CD4-positive, alpha-beta T cell (primary cell): ENCODE measurements at regions of chr20 and their contacts with region 1.

Region 1: DNA sequence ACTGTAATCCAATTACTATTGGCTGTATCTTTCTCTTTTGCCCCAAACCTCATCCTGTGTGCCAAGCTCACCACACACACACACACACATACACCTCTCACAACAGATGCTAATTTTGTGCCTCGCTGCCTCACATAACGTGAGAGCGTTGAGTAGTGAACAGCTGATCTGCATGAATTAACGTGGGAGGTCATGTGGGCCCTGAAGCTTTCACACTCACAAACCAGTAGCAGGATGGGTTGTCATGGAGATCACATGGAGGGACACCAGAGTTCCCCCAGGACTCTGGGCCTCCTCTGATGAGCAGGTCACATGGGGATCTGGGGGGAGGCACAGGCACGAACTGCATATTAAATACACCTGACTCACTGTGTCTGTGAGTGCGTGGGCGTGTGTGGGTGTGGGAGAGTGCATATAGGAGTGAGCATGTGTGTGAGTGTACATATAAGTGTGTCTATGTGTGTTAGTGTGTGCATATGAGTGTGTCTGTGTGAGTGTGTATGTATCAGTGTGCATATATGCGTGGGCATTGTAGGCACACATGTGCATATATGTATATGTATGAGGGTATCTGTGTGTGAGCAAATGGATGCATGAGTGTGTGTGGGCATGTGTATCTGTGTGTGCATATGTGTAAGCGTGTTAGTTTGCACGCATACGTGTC is 62.7 kb upstream of the SULF2 start:
- DNase-seq: no peak
- ATAC-seq: no peak
- H3K4me3 ChIP-seq: no peak overlapping the region
- H3K4me3 Mint-ChIP-seq: no peak overlapping the region
- H3K27ac ChIP-seq: no peak overlapping the region
- H3K27ac Mint-ChIP-seq: no peak overlapping the region
- H3K4me1 ChIP-seq: no peaks in the 10 kb centered on the region
- H3K4me1 Mint-ChIP-seq: no peaks in the 10 kb centered on the region
- H3K27me3 ChIP-seq: no peaks in the 10 kb centered on the region
- H3K27me3 Mint-ChIP-seq: peaks cover 17% of the 10 kb centered on the region
- CTCF ChIP-seq: no peak

Region 2: DNA sequence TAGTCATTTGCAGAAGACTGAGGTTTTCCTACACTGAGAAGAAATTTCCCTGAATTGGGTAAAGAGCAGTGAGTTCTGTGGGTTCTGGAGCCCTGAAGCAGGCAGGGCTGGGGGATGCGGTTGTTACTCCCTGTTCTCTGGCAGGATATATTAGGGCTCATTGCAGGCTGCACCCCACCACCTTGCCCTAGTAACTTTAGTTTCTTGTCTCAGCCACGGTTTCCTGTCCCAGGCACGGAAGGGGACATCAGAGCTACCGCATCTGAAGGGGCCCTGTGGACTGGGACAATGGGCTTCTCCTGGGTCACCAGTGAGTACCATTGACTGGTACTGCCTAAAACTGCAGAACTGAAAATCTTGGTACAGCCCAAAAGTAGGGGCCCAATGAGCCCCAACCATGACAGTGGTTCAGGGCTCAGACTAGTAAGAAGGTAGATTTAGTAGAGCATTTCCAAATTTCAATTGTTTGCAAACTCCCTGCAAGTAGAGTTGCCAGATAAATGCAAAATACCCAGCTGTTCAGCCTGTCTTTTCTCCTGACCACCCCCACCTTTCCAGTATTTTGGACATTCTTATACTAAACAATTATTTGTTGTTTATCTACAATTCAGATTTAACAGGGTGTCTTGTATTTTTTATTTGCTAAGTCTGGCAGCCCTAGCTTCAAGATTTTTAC is 1007.8 kb before region 1 on chr20:
- CTCF ChIA-PET with region 1: no interaction called
- POLR2A ChIA-PET with region 1: no interaction called
- intact Hi-C with region 1: no loop called
- DNase-seq: no peak
- ATAC-seq: no peak
- H3K4me3 ChIP-seq: no peak overlapping the region
- H3K4me3 Mint-ChIP-seq: no peak overlapping the region
- H3K27ac ChIP-seq: no peak overlapping the region
- H3K27ac Mint-ChIP-seq: no peak overlapping the region
- H3K4me1 ChIP-seq: no peaks in the 10 kb centered on the region
- H3K4me1 Mint-ChIP-seq: no peaks in the 10 kb centered on the region
- H3K27me3 ChIP-seq: peaks cover 0 to 5% of the 10 kb centered on the region in 2 experiments
- H3K27me3 Mint-ChIP-seq: peaks cover 50% of the 10 kb centered on the region
- CTCF ChIP-seq: no peak

Region 3: GRCh38 chr20:47886460-47887041 is 38.6 kb after region 1 on chr20:
- CTCF ChIA-PET with region 1: no interaction called
- POLR2A ChIA-PET with region 1: no interaction called
- intact Hi-C with region 1: loop called in 1 of 2 experiments (anchors 10 kb)
- DNase-seq: no peak
- ATAC-seq: no peak
- H3K4me3 ChIP-seq: no peak overlapping the region
- H3K4me3 Mint-ChIP-seq: no peak overlapping the region
- H3K27ac ChIP-seq: no peak overlapping the region
- H3K27ac Mint-ChIP-seq: no peak overlapping the region
- H3K4me1 ChIP-seq: no peaks in the 10 kb centered on the region
- H3K4me1 Mint-ChIP-seq: no peaks in the 10 kb centered on the region
- H3K27me3 ChIP-seq: no peaks in the 10 kb centered on the region
- H3K27me3 Mint-ChIP-seq: no peaks in the 10 kb centered on the region
- CTCF ChIP-seq: no peak

Region 4: GRCh38 chr20:48157718-48158419 is 309.9 kb after region 1 on chr20:
- CTCF ChIA-PET with region 1: no interaction called
- POLR2A ChIA-PET with region 1: no interaction called
- intact Hi-C with region 1: no loop called
- DNase-seq: no peak
- ATAC-seq: no peak
- H3K4me3 ChIP-seq: no peak overlapping the region
- H3K4me3 Mint-ChIP-seq: no peak overlapping the region
- H3K27ac ChIP-seq: no peak overlapping the region
- H3K27ac Mint-ChIP-seq: no peak overlapping the region
- H3K4me1 ChIP-seq: no peaks in the 10 kb centered on the region
- H3K4me1 Mint-ChIP-seq: no peaks in the 10 kb centered on the region
- H3K27me3 ChIP-seq: peaks cover 0 to 4% of the 10 kb centered on the region in 2 experiments
- H3K27me3 Mint-ChIP-seq: peaks cover 9% of the 10 kb centered on the region
- CTCF ChIP-seq: no peak